ENCODE measurements at regions of chr15 and their contacts with region 1.

Region 1: GRCh38 chr15:75453703-75454470 is 2.4 kb upstream of the SIN3A start:
- DNase-seq: peak; percentile 98
- ATAC-seq: peak; percentile 40
- H3K4me3 Mint-ChIP-seq: peak overlapping the region; percentile 99
- H3K27ac Mint-ChIP-seq: peak overlapping the region; percentile 96
- H3K4me1 Mint-ChIP-seq: peaks cover 18% of the 10 kb centered on the region
- H3K27me3 Mint-ChIP-seq: no peaks in the 10 kb centered on the region

Region 2: DNA sequence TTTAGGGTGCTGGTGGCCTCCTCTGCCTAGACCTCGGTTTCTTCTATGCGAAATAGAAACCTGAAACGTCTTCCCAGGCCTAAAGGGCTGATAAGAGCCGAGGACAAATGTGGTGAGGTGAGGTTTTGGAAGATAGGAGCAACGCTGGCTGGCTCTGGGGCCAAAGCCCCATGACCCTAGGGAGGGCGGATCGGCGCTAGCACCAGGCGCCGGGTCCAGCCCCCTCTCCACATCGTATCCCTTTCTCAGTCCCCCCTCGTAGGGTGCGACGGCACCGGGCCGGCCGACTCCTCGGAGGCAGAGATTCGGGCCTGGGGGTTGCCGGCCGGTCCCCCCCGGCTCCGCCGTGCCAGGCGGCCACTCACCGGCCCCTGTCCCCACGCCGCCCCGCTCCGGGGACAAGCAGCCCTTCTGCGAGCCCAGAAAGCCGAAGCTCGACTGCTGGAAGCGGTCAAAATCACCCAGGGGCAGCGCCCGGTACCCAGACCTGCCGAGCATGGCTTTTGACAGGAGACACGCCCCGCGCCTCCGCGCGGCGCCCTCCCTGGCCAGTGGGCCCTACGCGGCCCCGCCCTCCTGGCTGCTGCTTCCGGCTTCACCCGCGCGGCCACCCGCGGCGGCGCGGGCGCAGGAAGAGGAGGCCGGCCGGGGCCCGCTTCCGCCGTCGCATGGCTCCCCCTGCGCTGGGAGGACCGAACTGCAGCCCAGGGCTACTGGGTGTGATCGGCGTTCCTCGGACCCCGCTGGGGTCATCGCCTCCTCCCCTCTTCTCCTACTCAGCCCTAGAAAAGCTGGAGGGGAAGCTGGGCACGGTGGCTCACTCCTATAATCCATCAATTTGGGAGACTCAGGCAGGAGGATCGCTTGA is 1461.9 kb before region 1 on chr15 and contains the start of gene STOML1:
- CTCF ChIA-PET with region 1: no interaction called
- POLR2A ChIA-PET with region 1: no interaction called
- intact Hi-C with region 1: loop called in 1 of 2 experiments (anchors 5 kb)
- DNase-seq: peak; percentile 96
- ATAC-seq: peak; percentile 74
- H3K4me3 Mint-ChIP-seq: peak within 1 kb of the TSS; percentile 74
- H3K27ac Mint-ChIP-seq: peak within 1 kb of the TSS; percentile 86
- H3K4me1 Mint-ChIP-seq: peaks cover 42% of the 10 kb centered on the region
- H3K27me3 Mint-ChIP-seq: no peaks in the 10 kb centered on the region
- total RNA-seq, gene STOML1: 6.3 to 7.1 TPM

Region 3: DNA sequence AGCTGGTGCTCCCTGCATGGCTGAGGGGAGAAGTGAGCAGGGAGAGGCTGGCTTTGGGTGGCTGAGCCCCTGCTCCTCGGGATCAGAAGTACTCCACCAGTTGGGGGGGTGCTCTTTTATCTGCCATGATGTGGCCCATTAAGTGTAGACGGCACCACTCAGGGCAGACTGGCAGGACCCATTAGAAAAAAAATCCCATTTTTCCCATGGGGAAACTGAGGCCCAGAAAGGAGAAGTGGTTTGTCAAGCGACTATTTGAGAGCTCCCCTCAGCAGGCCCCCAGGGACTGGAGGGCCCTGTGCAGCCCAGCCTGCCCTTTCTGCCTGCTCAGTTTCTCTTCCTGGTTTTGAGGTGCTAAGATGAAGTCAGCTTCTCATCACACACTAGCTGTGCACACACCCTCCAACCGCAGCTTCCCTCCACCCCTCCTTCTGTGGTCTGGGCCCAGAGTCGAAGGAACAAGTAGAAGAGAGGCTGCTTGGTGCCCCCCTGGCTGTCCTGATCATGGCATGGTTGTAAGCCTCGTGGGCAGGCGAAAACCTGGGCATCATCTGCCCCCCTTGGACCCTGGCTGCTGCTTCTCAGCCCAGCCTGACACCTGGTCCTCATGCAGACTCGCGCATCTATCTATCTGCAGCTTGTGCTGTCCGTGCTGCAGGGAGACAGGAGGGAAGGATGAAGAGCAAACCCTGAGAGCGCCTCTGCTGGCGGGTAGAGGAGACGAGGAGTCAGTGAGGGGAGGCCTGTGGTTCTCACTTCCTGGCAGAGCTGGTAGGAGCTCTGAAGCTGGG is 666.4 kb before region 1 on chr15:
- CTCF ChIA-PET with region 1: no interaction called
- POLR2A ChIA-PET with region 1: no interaction called
- intact Hi-C with region 1: loop called (anchors 1 to 2 kb)
- DNase-seq: peak; percentile 97
- ATAC-seq: peak; percentile 74
- H3K4me3 Mint-ChIP-seq: peak overlapping the region; percentile 89
- H3K27ac Mint-ChIP-seq: peak overlapping the region; percentile 100
- H3K4me1 Mint-ChIP-seq: peaks cover 58% of the 10 kb centered on the region
- H3K27me3 Mint-ChIP-seq: no peaks in the 10 kb centered on the region

Region 4: DNA sequence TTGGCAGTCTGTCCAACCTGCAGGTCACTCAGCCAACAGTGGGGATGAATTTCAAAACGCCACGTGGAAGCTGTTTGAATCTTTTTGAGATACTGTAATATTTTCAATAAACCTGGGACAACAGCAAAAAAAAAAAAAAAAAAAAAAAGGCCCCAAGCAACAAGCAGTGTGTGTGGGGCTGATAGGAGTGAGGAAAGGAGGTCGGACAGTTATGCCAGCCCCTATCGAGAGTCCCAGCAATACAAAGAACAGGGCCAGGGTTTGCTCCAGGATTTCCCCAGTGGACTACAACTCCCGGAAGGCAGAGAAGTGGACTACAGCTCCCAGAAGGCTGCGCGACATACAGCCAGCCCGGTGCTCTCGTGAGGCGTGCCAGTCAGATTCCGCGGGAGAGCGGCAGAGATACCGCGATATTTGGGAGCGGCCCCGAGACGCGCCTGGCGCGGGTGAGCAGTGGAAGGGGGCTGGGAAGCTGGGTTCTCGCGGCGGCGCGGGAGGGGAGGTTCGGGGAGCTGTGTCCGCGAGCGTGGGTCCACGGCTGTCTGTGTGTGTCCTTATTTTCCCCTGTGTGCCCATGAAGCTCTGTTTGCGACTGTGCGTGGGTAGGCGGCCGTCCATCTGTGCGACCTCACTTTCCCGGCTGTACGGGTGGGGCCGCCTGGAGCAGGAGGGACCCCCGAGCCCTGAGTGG is 430.6 kb before region 1 on chr15 and contains the start of gene PPCDC:
- CTCF ChIA-PET with region 1: no interaction called
- POLR2A ChIA-PET with region 1: no interaction called
- intact Hi-C with region 1: loop called (anchors 1 to 5 kb)
- DNase-seq: peak; percentile 97
- ATAC-seq: peak; percentile 100
- H3K4me3 Mint-ChIP-seq: peak within 1 kb of the TSS; percentile 89
- H3K27ac Mint-ChIP-seq: peak within 1 kb of the TSS; percentile 95
- H3K4me1 Mint-ChIP-seq: peaks cover 13% of the 10 kb centered on the region
- H3K27me3 Mint-ChIP-seq: no peaks in the 10 kb centered on the region
- total RNA-seq, gene PPCDC: 23.3 to 24.0 TPM

Region 5: DNA sequence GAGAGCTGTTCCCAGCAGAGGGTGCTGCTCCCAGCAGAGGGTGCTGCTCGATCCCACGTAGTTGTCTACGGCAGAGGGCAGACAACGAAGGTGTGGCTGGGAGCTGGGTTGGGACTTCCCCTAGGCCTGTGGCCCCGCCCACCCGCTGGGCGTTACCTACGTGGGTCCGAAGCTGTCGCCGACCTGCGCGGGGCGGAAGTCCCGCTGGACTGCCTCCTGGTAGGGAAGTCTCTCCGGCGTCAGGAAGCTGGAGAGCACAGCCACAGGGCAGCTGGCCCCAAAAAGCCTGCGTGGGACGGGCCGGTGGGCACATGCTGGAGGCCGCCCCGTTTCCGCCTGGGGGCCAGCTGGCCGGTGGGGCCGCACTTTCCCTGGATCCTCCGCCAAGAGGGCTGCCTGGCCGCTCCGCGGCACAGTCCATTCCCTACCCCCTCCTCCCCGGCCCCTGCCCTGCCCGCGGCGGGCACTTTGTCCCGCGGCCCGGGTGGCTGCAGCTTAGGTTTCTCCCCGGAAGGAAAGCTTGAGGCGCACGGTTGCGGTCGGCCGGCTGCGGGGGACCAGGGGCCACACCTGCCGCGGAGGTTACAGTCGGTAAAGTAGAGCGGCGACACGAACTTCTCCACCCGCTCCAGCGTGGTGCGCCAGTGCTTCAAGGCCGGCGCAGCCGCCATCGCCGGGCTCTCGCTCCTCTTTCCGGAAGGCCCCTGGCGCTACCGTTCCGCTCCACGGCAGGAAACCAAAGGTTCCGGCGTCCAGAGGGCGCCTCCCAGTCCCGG is 85.8 kb before region 1 on chr15 and contains the start of gene MAN2C1:
- CTCF ChIA-PET with region 1: interaction called, 37 read pairs
- POLR2A ChIA-PET with region 1: interaction called, 83 read pairs
- intact Hi-C with region 1: loop called (anchors 1 to 2 kb)
- DNase-seq: peak; percentile 97
- ATAC-seq: peak; percentile 94
- H3K4me3 Mint-ChIP-seq: peak within 1 kb of the TSS; percentile 86
- H3K27ac Mint-ChIP-seq: peak within 1 kb of the TSS; percentile 95
- H3K4me1 Mint-ChIP-seq: peaks cover 26% of the 10 kb centered on the region
- H3K27me3 Mint-ChIP-seq: no peaks in the 10 kb centered on the region
- total RNA-seq, gene MAN2C1: 119 to 181 TPM

Region 6: DNA sequence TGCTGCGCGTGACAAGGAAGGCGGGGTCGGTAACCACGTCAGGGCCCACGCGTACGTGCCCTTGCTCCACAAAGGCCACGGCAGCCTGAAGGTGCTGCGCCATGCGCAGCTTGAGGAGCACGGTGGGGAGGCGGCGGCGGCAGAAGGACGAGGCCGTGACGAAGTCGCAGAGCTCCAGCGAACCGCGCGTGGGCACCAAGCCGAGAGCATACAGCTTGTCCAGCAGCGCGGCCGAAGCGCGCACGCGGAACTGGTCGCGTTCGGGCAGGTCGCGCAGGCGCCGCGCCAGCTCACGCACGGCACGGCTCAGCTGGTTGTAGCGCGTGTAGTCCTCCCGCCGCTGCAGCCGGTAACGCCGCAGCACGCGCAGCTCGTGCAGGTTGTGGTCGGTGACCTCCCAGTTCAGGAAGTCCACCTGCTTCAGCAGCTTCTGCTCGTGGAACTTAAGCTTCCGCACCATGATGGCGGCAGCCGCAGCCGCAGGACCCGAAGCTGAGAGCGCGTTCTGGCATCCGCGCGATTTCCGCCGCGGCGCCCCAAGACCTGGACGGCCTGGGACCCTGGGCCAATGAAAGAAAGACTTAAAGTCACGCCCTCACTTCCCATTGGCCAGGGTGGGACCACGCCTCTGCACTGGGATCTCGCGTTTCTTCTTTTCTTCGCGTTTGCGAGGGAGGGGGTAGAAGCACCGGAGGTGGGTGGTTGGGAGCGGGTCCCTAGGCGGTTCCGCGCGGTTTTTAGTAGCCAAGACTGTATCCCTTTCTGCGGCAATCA is 186.0 kb after region 1 on chr15 and contains the start of gene IMP3:
- CTCF ChIA-PET with region 1: interaction called, 12 read pairs
- POLR2A ChIA-PET with region 1: interaction called, 47 read pairs
- intact Hi-C with region 1: loop called (anchors 1 kb)
- DNase-seq: peak; percentile 96
- ATAC-seq: peak; percentile 92
- H3K4me3 Mint-ChIP-seq: peak within 1 kb of the TSS; percentile 99
- H3K27ac Mint-ChIP-seq: peak within 1 kb of the TSS; percentile 96
- H3K4me1 Mint-ChIP-seq: peaks cover 25% of the 10 kb centered on the region
- H3K27me3 Mint-ChIP-seq: no peaks in the 10 kb centered on the region
- total RNA-seq, gene IMP3: 80.3 to 87.5 TPM

Region 7: DNA sequence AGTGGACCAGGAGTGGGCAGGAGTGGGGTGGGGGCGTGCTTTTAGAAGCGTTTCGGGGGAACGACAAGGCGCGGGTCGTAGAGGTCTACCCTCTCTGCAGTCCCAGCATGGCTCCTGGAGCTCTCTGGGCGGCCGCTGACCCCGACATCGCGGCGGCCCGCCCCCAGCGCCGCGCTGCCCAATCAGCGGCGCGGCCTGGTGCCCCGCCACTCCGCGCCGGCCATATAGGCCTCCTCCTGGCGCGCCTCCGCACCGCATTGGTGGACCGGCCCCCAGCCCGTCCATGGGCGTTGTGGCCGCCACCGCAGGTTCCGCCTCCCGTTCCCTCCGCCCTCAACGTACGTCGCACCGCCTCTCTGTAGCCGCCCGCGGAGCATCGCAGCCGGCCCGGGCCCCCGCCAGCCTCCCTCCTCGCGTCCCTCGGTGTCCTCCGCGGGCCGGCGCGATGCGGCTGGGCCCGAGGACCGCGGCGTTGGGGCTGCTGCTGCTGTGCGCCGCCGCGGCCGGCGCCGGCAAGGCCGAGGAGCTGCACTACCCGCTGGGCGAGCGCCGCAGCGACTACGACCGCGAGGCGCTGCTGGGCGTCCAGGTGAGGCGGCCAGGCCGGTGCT is 1477.6 kb after region 1 on chr15 and contains the start of gene RCN2:
- CTCF ChIA-PET with region 1: no interaction called
- POLR2A ChIA-PET with region 1: no interaction called
- intact Hi-C with region 1: loop called in 1 of 2 experiments (anchors 5 kb)
- DNase-seq: peak; percentile 96
- ATAC-seq: peak; percentile 99
- H3K4me3 Mint-ChIP-seq: peak within 1 kb of the TSS; percentile 81
- H3K27ac Mint-ChIP-seq: peak within 1 kb of the TSS; percentile 85
- H3K4me1 Mint-ChIP-seq: peaks cover 31% of the 10 kb centered on the region
- H3K27me3 Mint-ChIP-seq: no peaks in the 10 kb centered on the region
- total RNA-seq, gene RCN2: 16.6 to 18.9 TPM